HepG2 (cell line): ENCODE measurements at regions of chr16 and their contacts with region 1.

Region 1: GRCh38 chr16:5033256-5034169 is at the start of gene NAGPA:
- DNase-seq: peak; percentile 87
- ATAC-seq: peak; percentile 43
- H3K4me3 ChIP-seq: peak within 1 kb of the TSS; percentile 77 to 91 (median 78)
- H3K27ac ChIP-seq: peak within 1 kb of the TSS; percentile 98
- H3K4me1 ChIP-seq: peaks cover 52% of the 10 kb centered on the region
- H3K27me3 ChIP-seq: no peaks in the 10 kb centered on the region; a peak in 1 of 5 replicates
- CTCF ChIP-seq: no peak
- EP300 ChIP-seq: peak in 1 of 2 experiments; percentile 78; a peak in 2 of 4 replicates
- POLR2A ChIP-seq: peak; percentile 76 to 92
- RAD21 ChIP-seq: peak; percentile 51
- total RNA-seq, gene NAGPA: 29.8 and 60.3 TPM in 2 replicates

Region 2: GRCh38 chr16:4936991-4937781 is 96.3 kb before region 1 on chr16 and contains the start of gene PPL:
- CTCF ChIA-PET with region 1: no interaction called
- POLR2A ChIA-PET with region 1: interaction called, 21 read pairs
- in situ Hi-C with region 1: no loop called
- intact Hi-C with region 1: no loop called
- DNase-seq: peak; percentile 93
- ATAC-seq: peak; percentile 91
- H3K4me3 ChIP-seq: peak within 1 kb of the TSS; percentile 76 to 91 (median 89)
- H3K27ac ChIP-seq: peak within 1 kb of the TSS; percentile 43
- H3K4me1 ChIP-seq: peaks cover 42% of the 10 kb centered on the region
- H3K27me3 ChIP-seq: no peaks in the 10 kb centered on the region; a peak in 1 of 5 replicates
- CTCF ChIP-seq: 0 out of 2 replicates have a peak, but pooled peaks have one; percentile 2
- EP300 ChIP-seq: peak in 1 of 2 experiments; percentile 37; a peak in 1 of 4 replicates
- POLR2A ChIP-seq: peak; percentile 16 to 72; a peak in 2 of 4 replicates
- RAD21 ChIP-seq: peak; percentile 24; the same call in 1 of the 2 replicates
- total RNA-seq, gene PPL: 4.4 and 6.6 TPM in 2 replicates

Region 3: GRCh38 chr16:4944333-4945281 is 88.9 kb before region 1 on chr16:
- CTCF ChIA-PET with region 1: no interaction called
- POLR2A ChIA-PET with region 1: interaction called, 21 read pairs
- in situ Hi-C with region 1: no loop called
- intact Hi-C with region 1: no loop called
- DNase-seq: peak; percentile 98
- ATAC-seq: peak; percentile 82
- H3K4me3 ChIP-seq: peak overlapping the region; percentile 9 to 63 (median 15); a peak in 4 of 6 replicates
- H3K27ac ChIP-seq: peak overlapping the region; percentile 62
- H3K4me1 ChIP-seq: peaks cover 91% of the 10 kb centered on the region
- H3K27me3 ChIP-seq: no peaks in the 10 kb centered on the region; a peak in 1 of 5 replicates
- CTCF ChIP-seq: peak; percentile 12; the same call in 1 of the 2 replicates
- EP300 ChIP-seq: peak; percentile 80 to 84
- POLR2A ChIP-seq: peak in 1 of 2 experiments; percentile 56; a peak in 2 of 4 replicates
- RAD21 ChIP-seq: peak; percentile 62

Region 4: GRCh38 chr16:5056352-5056751 is 22.8 kb after region 1 on chr16:
- CTCF ChIA-PET with region 1: no interaction called
- POLR2A ChIA-PET with region 1: interaction called, 3 read pairs
- in situ Hi-C with region 1: no loop called
- intact Hi-C with region 1: loop called (anchors 2 kb)
- DNase-seq: peak; percentile 65
- ATAC-seq: peak; percentile 89
- H3K4me3 ChIP-seq: no peak overlapping the region
- H3K27ac ChIP-seq: no peak overlapping the region
- H3K4me1 ChIP-seq: 0 out of 2 replicates have a peak, but pooled peaks cover 5% of the 10 kb centered on the region
- H3K27me3 ChIP-seq: peaks cover 0 to 2% of the 10 kb centered on the region in 2 experiments; a peak in 1 of 5 replicates
- CTCF ChIP-seq: peak; percentile 90
- EP300 ChIP-seq: no peak
- POLR2A ChIP-seq: no peak
- RAD21 ChIP-seq: peak; percentile 87

Region 5: GRCh38 chr16:5071681-5072333 is 38.3 kb after region 1 on chr16 and contains the start of gene ALG1:
- CTCF ChIA-PET with region 1: no interaction called
- POLR2A ChIA-PET with region 1: interaction called, 15 read pairs
- in situ Hi-C with region 1: no loop called
- intact Hi-C with region 1: loop called (anchors 5 kb)
- DNase-seq: peak; percentile 83
- ATAC-seq: peak; percentile 90
- H3K4me3 ChIP-seq: peak within 1 kb of the TSS; percentile 79 to 89 (median 82)
- H3K27ac ChIP-seq: peak within 1 kb of the TSS; percentile 70
- H3K4me1 ChIP-seq: peaks cover 23% of the 10 kb centered on the region
- H3K27me3 ChIP-seq: no peaks in the 10 kb centered on the region; a peak in 1 of 5 replicates
- CTCF ChIP-seq: peak; percentile 46
- EP300 ChIP-seq: peak in 1 of 2 experiments; percentile 16; a peak in 1 of 4 replicates
- POLR2A ChIP-seq: peak; percentile 97 to 100
- RAD21 ChIP-seq: peak; percentile 80
- total RNA-seq, gene ALG1: 39.6 and 75.6 TPM in 2 replicates